Activated B cell treated with CpG ODN at 0.5 μM for 24 hours (primary cell): ENCODE measurements at regions of chr6 and their contacts with region 1.

Region 1: GRCh38 chr6:12011276-12012076 is 636 bp upstream of the HIVEP1 start:
- DNase-seq: peak; percentile 92
- ATAC-seq: peak; percentile 72
- H3K4me3 Mint-ChIP-seq: peak overlapping the region; percentile 92
- H3K27ac Mint-ChIP-seq: peak overlapping the region; percentile 95
- H3K4me1 Mint-ChIP-seq: peaks cover 50% of the 10 kb centered on the region
- H3K27me3 Mint-ChIP-seq: no peaks in the 10 kb centered on the region
- CTCF ChIP-seq: no peak

Region 2: DNA sequence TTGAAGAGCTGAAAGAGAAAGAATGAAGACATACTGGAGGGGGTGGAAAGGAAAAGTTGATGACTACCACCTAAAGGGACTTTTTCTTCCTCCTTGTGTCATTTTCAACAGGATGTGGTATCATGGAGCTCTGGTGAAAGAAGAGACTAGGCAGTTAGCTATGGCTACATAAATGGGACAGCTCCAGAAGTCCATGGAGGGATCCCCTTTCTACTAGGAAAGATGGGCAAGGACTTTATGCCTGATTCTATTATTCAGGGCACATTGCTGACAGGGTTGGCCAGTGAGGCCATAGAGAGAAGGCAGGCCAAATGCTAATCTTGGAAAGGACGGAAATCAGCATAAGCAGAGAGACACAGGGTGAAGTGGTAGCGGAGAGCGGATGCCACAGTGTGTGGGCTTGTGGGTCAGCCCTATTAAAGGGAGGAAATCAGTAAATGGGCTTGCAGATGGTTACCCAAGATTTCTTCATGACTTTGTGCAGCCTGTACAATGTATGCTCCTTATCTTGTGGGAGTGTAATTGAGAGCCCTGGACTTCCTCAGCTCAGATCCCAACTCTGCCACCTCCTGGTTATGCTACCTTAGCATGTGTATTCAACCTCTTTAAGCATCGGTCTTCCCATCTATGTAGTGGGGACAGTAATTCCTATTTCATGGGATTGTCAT is 551.3 kb before region 1 on chr6:
- CTCF ChIA-PET with region 1: no interaction called
- POLR2A ChIA-PET with region 1: no interaction called
- intact Hi-C with region 1: loop called (anchors 5 kb)
- DNase-seq: peak; percentile 22
- ATAC-seq: peak; percentile 18
- H3K4me3 Mint-ChIP-seq: peak overlapping the region; percentile 80
- H3K27ac Mint-ChIP-seq: peak overlapping the region; percentile 96
- H3K4me1 Mint-ChIP-seq: peaks cover 78% of the 10 kb centered on the region
- H3K27me3 Mint-ChIP-seq: no peaks in the 10 kb centered on the region
- CTCF ChIP-seq: no peak

Region 3: GRCh38 chr6:11824986-11825385 is 186.5 kb before region 1 on chr6:
- CTCF ChIA-PET with region 1: interaction called, 3 read pairs
- POLR2A ChIA-PET with region 1: interaction called, 21 read pairs
- intact Hi-C with region 1: loop called (anchors 1 kb)
- DNase-seq: no peak
- ATAC-seq: peak; percentile 83
- H3K4me3 Mint-ChIP-seq: peak overlapping the region; percentile 36
- H3K27ac Mint-ChIP-seq: peak overlapping the region; percentile 64
- H3K4me1 Mint-ChIP-seq: peaks cover 42% of the 10 kb centered on the region
- H3K27me3 Mint-ChIP-seq: no peaks in the 10 kb centered on the region
- CTCF ChIP-seq: no peak

Region 4: DNA sequence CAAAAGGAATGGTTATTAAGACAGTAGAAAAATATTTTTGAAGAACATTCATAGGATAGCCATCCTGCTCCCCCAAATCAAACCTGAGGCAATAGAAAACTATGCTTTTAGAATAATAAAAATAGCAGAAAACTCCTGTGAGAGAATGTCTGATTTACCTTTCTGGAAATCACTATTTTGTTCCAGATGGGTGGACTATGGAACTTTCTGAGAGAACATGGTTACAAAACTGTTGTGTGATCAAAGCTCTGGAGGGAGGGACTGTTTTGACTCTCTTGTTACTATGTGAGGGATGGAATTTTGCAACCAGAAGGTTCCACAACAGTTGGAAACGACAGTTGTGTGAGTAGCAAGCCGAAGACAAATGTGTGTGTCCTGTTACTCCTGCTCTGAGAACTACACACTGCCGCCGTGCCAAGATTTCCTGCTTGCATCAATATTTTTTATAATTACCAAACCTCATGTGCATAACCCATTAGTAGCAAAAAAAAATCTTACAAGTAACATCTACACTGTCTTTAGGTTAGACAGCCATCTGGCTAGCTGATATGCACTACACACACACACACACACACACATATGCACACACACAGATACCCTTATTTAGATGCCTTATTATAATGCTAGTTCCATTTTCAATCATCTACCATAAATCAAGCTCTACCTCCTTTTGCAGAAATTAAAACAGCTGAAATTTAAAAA is 10.3 kb before region 1 on chr6:
- CTCF ChIA-PET with region 1: no interaction called
- POLR2A ChIA-PET with region 1: no interaction called
- intact Hi-C with region 1: loop called (anchors 1 kb)
- DNase-seq: no peak
- ATAC-seq: no peak
- H3K4me3 Mint-ChIP-seq: no peak overlapping the region
- H3K27ac Mint-ChIP-seq: no peak overlapping the region
- H3K4me1 Mint-ChIP-seq: no peaks in the 10 kb centered on the region
- H3K27me3 Mint-ChIP-seq: no peaks in the 10 kb centered on the region
- CTCF ChIP-seq: no peak

Region 5: GRCh38 chr6:12060780-12061619 is 49.5 kb after region 1 on chr6:
- CTCF ChIA-PET with region 1: interaction called, 5 read pairs
- POLR2A ChIA-PET with region 1: interaction called, 39 read pairs
- intact Hi-C with region 1: loop called (anchors 1 kb)
- DNase-seq: peak; percentile 66
- ATAC-seq: peak; percentile 88
- H3K4me3 Mint-ChIP-seq: peak overlapping the region; percentile 90
- H3K27ac Mint-ChIP-seq: peak overlapping the region; percentile 97
- H3K4me1 Mint-ChIP-seq: peaks cover 78% of the 10 kb centered on the region
- H3K27me3 Mint-ChIP-seq: no peaks in the 10 kb centered on the region
- CTCF ChIP-seq: no peak

Region 6: DNA sequence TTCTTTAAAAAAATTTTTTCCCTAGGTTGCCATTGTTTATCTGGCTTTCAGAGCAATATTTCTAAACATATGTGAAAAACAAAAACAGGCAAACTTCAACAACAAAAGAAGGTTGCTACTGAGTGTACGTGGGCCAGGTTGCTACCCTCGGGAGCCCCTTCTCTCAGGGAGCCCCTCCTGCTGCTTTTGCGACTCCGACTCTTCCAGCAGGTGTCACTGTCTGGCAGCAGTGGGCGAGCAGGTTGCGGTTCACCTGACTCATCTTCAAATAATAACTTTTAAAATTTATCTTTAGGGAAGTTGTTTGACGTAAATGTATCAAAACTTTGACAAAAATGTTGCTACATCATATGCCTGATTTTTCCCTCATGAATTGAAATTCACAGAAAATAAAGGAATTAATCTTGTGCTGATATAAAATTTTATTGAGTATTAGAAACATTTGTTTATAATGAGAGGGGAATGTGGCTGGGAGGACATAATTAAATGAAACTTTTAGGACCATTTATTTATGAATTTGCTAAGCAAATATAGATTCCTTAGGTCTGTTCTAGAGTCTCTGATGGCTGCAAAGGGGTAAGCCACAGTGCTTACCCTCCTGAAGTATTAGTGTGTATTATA is 139.4 kb after region 1 on chr6:
- CTCF ChIA-PET with region 1: no interaction called
- POLR2A ChIA-PET with region 1: no interaction called
- intact Hi-C with region 1: no loop called
- DNase-seq: no peak
- ATAC-seq: no peak
- H3K4me3 Mint-ChIP-seq: no peak overlapping the region
- H3K27ac Mint-ChIP-seq: no peak overlapping the region
- H3K4me1 Mint-ChIP-seq: peaks cover 16% of the 10 kb centered on the region
- H3K27me3 Mint-ChIP-seq: no peaks in the 10 kb centered on the region
- CTCF ChIP-seq: no peak

Region 7: DNA sequence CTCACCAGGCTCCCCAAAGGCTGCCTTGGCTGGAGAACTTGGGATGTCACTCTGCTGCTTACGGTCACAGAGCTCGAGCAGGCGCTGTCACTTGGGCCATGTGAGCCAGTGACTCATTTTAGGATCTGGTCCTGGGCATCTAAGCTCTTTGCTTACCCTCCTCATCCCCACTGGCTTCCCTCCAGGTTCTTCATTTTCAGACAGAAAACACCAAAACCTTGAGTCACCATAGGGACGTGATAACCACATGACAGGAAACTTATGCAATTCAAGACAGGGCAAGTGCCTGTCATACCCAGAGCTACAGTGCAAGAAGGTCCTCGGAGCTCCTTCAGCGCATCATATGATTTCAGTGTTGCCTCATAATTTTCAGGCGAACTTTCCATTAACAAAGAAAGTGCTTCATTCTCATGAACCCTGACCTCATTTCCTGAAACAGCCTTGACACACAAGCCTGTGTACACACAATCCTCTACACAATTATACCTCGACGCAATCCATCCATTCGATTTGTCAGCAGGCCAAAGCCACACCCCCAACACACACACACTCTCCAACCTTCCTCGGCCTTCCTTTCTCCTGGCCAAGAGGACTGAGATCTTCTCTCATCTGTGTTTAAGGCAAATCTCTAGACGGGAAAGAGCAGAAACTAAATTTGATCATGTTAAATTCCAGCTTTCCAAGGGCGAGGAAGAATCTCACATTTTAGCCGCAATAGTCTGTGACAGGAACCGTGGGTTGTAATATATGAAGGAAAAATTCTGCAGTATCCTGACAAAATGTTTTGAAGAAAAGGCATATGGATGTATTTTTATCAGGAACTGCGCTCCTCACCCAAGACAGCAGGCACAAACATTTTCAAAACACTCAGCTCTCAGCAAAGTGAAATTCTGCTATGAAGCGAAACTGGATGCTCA is 1291.5 kb after region 1 on chr6:
- CTCF ChIA-PET with region 1: no interaction called
- POLR2A ChIA-PET with region 1: no interaction called
- intact Hi-C with region 1: loop called (anchors 2 kb)
- DNase-seq: no peak
- ATAC-seq: peak; percentile 55
- H3K4me3 Mint-ChIP-seq: peak overlapping the region; percentile 63
- H3K27ac Mint-ChIP-seq: peak overlapping the region; percentile 92
- H3K4me1 Mint-ChIP-seq: peaks cover 79% of the 10 kb centered on the region
- H3K27me3 Mint-ChIP-seq: no peaks in the 10 kb centered on the region
- CTCF ChIP-seq: no peak